Caco-2 (cell line): ENCODE measurements at regions of chr12 and their contacts with region 1.

Region 1: GRCh38 chr12:105860565-105861207 is 278.1 kb downstream of the NUAK1 start:
- DNase-seq: peak; percentile 84 to 88
- H3K4me3 ChIP-seq: no peak overlapping the region
- H3K4me3 Mint-ChIP-seq: peak overlapping the region; percentile 40
- H3K27ac Mint-ChIP-seq: peak overlapping the region; percentile 79
- H3K4me1 ChIP-seq: peaks cover 31% of the 10 kb centered on the region
- H3K4me1 Mint-ChIP-seq: peaks cover 28% of the 10 kb centered on the region
- H3K27me3 ChIP-seq: no peaks in the 10 kb centered on the region
- H3K27me3 Mint-ChIP-seq: no peaks in the 10 kb centered on the region
- CTCF ChIP-seq: no peak

Region 2: DNA sequence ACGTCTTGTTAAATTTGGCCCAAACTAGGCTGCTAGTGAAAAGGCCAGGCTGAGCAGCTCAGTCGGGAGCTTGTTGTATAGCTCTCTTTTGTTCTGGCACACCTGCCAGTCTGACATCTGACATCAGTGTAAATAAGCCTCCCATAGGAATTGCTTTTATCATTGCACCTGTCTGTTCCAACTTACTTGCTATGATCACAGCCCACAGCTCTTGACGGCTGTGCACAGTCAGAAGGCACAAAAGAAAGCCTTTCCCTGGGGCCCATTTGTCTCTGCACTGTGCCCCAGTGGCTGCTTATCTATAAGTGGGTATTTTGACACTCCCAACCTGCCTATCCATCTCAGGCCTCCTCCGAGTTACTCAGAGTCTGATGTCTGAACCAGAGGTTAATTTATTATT is 46.4 kb before region 1 on chr12:
- CTCF ChIA-PET with region 1: no interaction called
- POLR2A ChIA-PET with region 1: no interaction called
- intact Hi-C with region 1: loop called (anchors 1 kb)
- DNase-seq: peak; percentile 58 to 61
- H3K4me3 ChIP-seq: no peak overlapping the region
- H3K4me3 Mint-ChIP-seq: no peak overlapping the region
- H3K27ac Mint-ChIP-seq: peak overlapping the region; percentile 45
- H3K4me1 ChIP-seq: peaks cover 18% of the 10 kb centered on the region
- H3K4me1 Mint-ChIP-seq: no peaks in the 10 kb centered on the region
- H3K27me3 ChIP-seq: no peaks in the 10 kb centered on the region
- H3K27me3 Mint-ChIP-seq: no peaks in the 10 kb centered on the region
- CTCF ChIP-seq: no peak

Region 3: DNA sequence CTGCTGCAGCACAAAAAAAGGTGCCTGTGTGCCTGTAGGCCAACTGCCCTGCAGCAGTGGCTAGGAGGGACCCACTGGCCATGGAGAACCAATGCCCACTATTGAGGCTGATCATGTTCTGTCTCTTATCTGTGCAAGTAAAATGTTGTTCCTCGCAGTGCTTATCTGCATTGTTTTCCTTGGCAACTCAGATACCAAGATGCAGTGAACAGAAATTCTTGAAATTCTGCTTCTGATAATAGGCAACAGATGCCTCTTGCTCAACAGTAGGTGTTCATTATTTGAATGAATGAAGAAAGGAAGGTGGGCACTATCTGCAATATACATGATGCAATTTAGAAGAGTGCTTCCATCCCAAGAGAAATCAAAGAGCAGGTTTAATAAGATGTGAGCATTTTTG is 45.9 kb after region 1 on chr12:
- CTCF ChIA-PET with region 1: no interaction called
- POLR2A ChIA-PET with region 1: no interaction called
- intact Hi-C with region 1: loop called (anchors 2 kb)
- DNase-seq: peak in 1 of 2 experiments; percentile 38
- H3K4me3 ChIP-seq: no peak overlapping the region
- H3K4me3 Mint-ChIP-seq: no peak overlapping the region
- H3K27ac Mint-ChIP-seq: peak overlapping the region; percentile 2
- H3K4me1 ChIP-seq: peaks cover 14% of the 10 kb centered on the region
- H3K4me1 Mint-ChIP-seq: peaks cover 15% of the 10 kb centered on the region
- H3K27me3 ChIP-seq: no peaks in the 10 kb centered on the region
- H3K27me3 Mint-ChIP-seq: no peaks in the 10 kb centered on the region
- CTCF ChIP-seq: no peak